Mammary epithelial cell (primary cell): ENCODE measurements at regions of chr7 and their contacts with region 1.

Region 1: GRCh38 chr7:125462615-125463014 is 533.0 kb upstream of the POT1 start:
- DNase-seq: no peak
- H3K4me3 ChIP-seq: no peak overlapping the region
- H3K27ac ChIP-seq: no peak overlapping the region
- H3K4me1 ChIP-seq: no peaks in the 10 kb centered on the region
- H3K27me3 ChIP-seq: no peaks in the 10 kb centered on the region
- CTCF ChIP-seq: no peak

Region 2: GRCh38 chr7:125480762-125481161 is 18.1 kb after region 1 on chr7:
- CTCF ChIA-PET with region 1: no interaction called
- dilution Hi-C with region 1: no loop called
- in situ Hi-C with region 1: no loop called
- intact Hi-C with region 1: loop called (anchors 1 kb)
- DNase-seq: no peak
- H3K4me3 ChIP-seq: no peak overlapping the region
- H3K27ac ChIP-seq: no peak overlapping the region
- H3K4me1 ChIP-seq: no peaks in the 10 kb centered on the region
- H3K27me3 ChIP-seq: no peaks in the 10 kb centered on the region
- CTCF ChIP-seq: no peak